ENCODE measurements at regions of chr18 and their contacts with region 1.

Region 1: GRCh38 chr18:22465859-22466457 is 48.2 kb upstream of the CTAGE1 start:
- DNase-seq: peak; percentile 98
- H3K4me3 ChIP-seq: no peak overlapping the region
- H3K27ac ChIP-seq: peak overlapping the region; percentile 99
- H3K4me1 ChIP-seq: peaks cover 22% of the 10 kb centered on the region
- H3K27me3 ChIP-seq: no peaks in the 10 kb centered on the region
- CTCF ChIP-seq: no peak

Region 2: DNA sequence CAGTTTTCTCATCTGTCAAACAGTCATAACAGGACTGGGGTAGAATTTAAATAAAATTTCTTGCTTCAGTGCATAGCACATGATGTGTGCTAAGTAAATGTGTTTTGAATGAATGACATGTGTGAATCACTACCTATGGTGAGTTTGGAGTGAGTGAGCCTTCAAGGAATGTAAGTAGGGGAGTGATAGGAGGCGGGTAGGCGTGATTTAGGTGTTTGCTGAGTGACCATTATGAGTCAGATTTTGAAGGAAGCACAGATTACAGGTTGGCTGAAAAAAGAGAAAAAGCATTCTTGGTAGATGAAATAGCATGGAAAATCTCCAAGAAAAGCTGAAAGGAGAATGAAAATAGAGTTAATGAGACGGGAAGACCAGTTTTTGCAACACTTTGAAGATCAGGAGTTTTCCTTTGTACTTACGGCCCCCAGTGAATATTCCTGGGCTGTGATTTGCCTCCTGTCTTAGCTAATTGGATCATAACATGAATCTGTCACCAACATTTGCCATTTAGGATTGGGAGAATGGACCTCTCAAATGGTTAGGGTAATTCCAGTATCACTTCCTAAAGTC is 433.5 kb before region 1 on chr18:
- CTCF ChIA-PET with region 1: no interaction called
- dilution Hi-C with region 1: no loop called
- in situ Hi-C with region 1: no loop called
- intact Hi-C with region 1: loop called (anchors 2 kb)
- DNase-seq: peak; percentile 97
- H3K4me3 ChIP-seq: no peak overlapping the region
- H3K27ac ChIP-seq: peak overlapping the region; percentile 49
- H3K4me1 ChIP-seq: peaks cover 19% of the 10 kb centered on the region
- H3K27me3 ChIP-seq: no peaks in the 10 kb centered on the region
- CTCF ChIP-seq: no peak

Region 3: GRCh38 chr18:22223254-22223960 is 242.6 kb before region 1 on chr18:
- CTCF ChIA-PET with region 1: no interaction called
- dilution Hi-C with region 1: no loop called
- in situ Hi-C with region 1: no loop called
- intact Hi-C with region 1: loop called (anchors 2 kb)
- DNase-seq: peak; percentile 99
- H3K4me3 ChIP-seq: no peak overlapping the region
- H3K27ac ChIP-seq: no peak overlapping the region
- H3K4me1 ChIP-seq: peaks cover 16% of the 10 kb centered on the region
- H3K27me3 ChIP-seq: no peaks in the 10 kb centered on the region
- CTCF ChIP-seq: no peak

Region 4: GRCh38 chr18:22391407-22392345 is 74.3 kb before region 1 on chr18:
- CTCF ChIA-PET with region 1: no interaction called
- dilution Hi-C with region 1: no loop called
- in situ Hi-C with region 1: no loop called
- intact Hi-C with region 1: loop called (anchors 2 kb)
- DNase-seq: peak; percentile 99
- H3K4me3 ChIP-seq: no peak overlapping the region
- H3K27ac ChIP-seq: peak overlapping the region; percentile 74
- H3K4me1 ChIP-seq: peaks cover 15% of the 10 kb centered on the region
- H3K27me3 ChIP-seq: no peaks in the 10 kb centered on the region
- CTCF ChIP-seq: no peak

Region 5: DNA sequence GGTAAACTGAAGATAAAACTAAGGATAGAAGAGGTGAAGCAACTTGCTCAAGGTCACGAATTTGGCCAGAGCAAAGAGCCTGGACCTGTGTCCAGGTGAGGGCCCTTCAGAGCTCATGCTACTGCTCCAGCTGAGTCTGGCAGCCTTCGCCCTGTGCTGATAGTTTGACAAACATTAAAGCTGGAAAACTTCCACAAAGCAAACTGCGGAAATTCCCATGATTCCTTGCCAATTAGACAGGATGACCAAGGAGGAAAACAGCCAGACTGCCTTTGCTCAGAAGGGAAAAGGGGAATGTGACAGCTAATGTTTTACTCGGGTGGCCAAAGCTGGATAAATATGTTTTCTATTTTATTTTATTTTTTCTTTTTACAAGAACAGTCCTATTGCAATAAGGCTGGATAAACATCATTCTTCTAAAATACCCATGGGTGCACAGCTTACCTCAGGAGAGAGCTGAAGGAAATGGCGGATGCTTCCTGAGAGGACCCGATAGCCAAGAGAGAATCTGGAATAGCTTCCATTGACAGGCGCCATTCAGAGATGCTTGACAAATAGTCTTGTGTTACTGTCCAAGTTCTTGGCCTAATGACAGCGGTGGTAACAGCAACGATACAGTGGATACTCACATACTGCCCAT is 42.9 kb before region 1 on chr18:
- CTCF ChIA-PET with region 1: no interaction called
- dilution Hi-C with region 1: no loop called
- in situ Hi-C with region 1: no loop called
- intact Hi-C with region 1: no loop called
- DNase-seq: peak; percentile 20
- H3K4me3 ChIP-seq: no peak overlapping the region
- H3K27ac ChIP-seq: no peak overlapping the region
- H3K4me1 ChIP-seq: no peaks in the 10 kb centered on the region
- H3K27me3 ChIP-seq: no peaks in the 10 kb centered on the region
- CTCF ChIP-seq: no peak

Region 6: GRCh38 chr18:22485808-22486244 is 19.9 kb after region 1 on chr18:
- CTCF ChIA-PET with region 1: no interaction called
- dilution Hi-C with region 1: no loop called
- in situ Hi-C with region 1: no loop called
- intact Hi-C with region 1: no loop called
- DNase-seq: peak; percentile 69
- H3K4me3 ChIP-seq: no peak overlapping the region
- H3K27ac ChIP-seq: no peak overlapping the region
- H3K4me1 ChIP-seq: peaks cover 9% of the 10 kb centered on the region
- H3K27me3 ChIP-seq: no peaks in the 10 kb centered on the region
- CTCF ChIP-seq: no peak

Region 7: GRCh38 chr18:22921772-22922171 is 455.8 kb after region 1 on chr18:
- CTCF ChIA-PET with region 1: no interaction called
- dilution Hi-C with region 1: no loop called
- in situ Hi-C with region 1: no loop called
- intact Hi-C with region 1: no loop called
- DNase-seq: no peak
- H3K4me3 ChIP-seq: no peak overlapping the region
- H3K27ac ChIP-seq: no peak overlapping the region
- H3K4me1 ChIP-seq: peaks cover 33% of the 10 kb centered on the region
- H3K27me3 ChIP-seq: no peaks in the 10 kb centered on the region
- CTCF ChIP-seq: no peak

Measured in mammary epithelial cell (primary cell).